Ascending aorta (tissue), 2 donors: ENCODE measurements at regions of chr19 and their contacts with region 1.

Region 1: GRCh38 chr19:57389730-57390598 is at the start of gene ZNF548:
- DNase-seq: peak; percentile 97 to 99
- H3K4me3 ChIP-seq: peak within 1 kb of the TSS; percentile 72 to 80
- H3K27ac ChIP-seq: peak within 1 kb of the TSS; percentile 93
- H3K4me1 ChIP-seq: peaks cover 0 to 10% of the 10 kb centered on the region in 2 donors
- H3K27me3 ChIP-seq: no peaks in the 10 kb centered on the region
- CTCF ChIP-seq: peak in 2 of 3 experiments; percentile 15 to 35
- total RNA-seq, gene ZNF548: 0.96 TPM

Region 2: DNA sequence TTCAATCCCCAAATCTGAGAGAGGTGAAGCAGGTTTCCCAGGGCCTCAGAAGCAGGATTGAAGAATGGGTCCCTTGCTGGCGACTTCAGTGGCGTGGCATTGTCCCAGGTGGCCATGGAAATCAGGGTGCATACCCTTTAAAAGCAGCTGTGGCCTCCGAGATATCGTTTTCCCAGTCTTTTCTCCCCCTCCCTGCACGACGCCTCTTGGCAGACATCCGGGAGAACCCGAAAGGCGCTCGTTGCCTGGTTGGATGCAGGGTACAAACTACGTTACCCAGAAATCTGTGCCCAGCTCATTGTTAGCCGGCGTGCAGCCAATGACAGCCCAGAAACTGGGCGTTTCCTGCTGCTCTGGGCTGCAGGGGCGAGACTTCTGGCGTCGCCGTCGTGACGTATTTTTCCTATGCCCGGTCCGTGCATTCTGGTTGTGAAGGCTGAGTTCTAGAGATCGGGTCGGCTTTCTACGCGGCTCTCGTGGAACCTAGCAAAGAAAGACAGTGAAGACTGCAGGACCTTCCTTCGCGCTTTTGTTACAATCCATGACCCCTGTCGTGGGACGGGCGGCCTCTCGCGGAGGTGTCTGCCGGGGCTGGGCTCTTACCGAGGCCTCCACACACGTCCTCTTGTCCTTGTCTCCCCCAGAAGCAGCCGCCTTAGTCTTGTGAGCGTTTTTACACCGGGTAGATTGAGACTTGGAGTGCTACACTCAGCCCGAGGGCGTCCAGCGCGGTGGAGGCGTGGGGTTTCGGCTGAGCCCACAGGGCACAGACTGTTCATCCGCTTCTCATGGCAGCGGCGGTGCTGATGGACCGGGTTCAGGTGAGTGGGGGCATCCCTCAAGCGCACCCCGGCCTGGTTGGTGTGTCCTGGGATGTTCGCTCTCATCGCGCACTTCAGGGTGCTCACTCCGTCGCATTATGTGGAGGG is 38.8 kb before region 1 on chr19 and contains the start of gene ZNF304:
- intact Hi-C with region 1: loop called (anchors 1 kb)
- DNase-seq: peak; percentile 79 to 95
- H3K4me3 ChIP-seq: peak within 1 kb of the TSS; percentile 71 to 75
- H3K27ac ChIP-seq: peak within 1 kb of the TSS; percentile 56 to 72
- H3K4me1 ChIP-seq: peaks cover 0 to 8% of the 10 kb centered on the region in 2 donors
- H3K27me3 ChIP-seq: no peaks in the 10 kb centered on the region
- CTCF ChIP-seq: no peak
- total RNA-seq, gene ZNF304: 5.9 TPM

Region 3: DNA sequence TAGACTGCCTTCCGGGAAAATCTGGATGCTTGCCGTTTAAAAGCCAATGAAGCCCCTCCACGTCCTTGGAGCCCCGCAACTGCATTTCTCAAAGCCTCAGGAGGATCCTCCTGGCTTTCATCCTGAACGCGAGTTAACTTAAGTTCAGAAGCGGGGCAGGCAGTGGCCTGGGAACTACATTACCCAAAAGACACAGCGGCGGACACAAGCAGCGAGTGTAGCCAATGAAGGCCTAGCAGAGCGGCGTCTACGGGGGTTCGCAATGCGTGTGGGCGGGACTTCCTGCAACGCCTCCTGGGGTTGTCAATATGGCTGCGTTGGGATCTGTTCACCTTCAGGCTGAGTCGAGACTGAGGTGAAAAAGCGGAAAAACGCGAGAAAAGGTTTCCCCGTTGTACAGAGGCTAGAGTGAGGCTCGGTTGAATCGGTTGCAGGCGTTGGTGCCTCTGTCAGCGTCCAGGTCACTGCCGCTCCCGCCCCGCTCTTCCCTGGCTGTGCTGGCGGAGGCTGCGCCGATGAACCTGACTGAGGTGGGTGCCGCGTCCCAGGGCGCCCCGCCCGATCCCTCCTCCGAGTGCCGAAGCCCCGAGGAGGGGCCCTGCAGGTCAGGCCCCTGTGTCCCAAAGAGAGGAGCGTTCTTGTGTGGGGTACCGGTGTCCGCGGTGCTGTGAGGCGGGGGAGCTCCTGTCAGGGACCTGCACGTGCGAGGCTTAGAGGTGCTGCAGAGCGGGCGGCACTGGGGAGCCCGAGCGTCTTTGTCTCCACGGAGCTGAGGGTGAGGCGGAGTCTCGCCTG is 21.1 kb after region 1 on chr19 and contains the start of gene ZNF17:
- intact Hi-C with region 1: loop called (anchors 1 kb)
- DNase-seq: peak; percentile 80 to 96
- H3K4me3 ChIP-seq: peak within 1 kb of the TSS; percentile 65 to 87
- H3K27ac ChIP-seq: peak within 1 kb of the TSS; percentile 63 to 71
- H3K4me1 ChIP-seq: no peaks in the 10 kb centered on the region
- H3K27me3 ChIP-seq: no peaks in the 10 kb centered on the region
- CTCF ChIP-seq: no peak
- total RNA-seq, gene ZNF17: 1.5 TPM

Region 4: DNA sequence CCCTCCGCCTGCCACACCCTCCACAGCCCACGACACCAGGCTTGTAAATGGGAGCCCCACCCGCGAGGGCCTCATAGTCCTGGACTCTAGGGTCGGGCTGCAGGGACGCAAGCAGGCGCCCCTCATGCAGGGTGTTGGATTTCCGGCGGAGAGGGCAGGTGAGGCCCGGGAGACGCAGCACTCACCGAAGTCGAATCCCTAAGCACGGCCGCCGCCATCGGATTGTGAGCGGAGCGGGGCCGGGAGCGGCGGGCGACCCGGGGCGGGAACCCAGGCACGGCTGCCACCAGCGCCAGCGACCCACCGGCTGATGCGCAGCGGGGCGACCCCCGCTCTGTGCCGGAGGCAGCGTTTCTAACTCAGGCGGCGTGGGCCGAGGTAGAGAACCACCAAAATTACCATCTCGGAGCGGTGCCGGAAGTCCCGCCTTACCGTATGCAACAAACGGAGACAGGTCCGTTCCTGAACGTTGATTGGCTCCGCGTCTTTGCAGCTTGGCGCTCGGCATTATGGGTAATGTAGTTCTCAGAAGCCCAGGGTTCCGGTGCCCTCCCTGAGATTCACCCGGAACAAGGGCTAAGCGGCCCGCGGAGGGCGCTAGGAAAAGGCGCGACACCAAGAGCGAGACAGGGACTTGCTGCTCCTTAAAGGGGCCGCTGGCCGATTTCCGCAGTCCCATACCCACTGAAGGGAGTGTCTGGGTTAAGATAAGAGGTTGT is 188.7 kb after region 1 on chr19 and contains the start of gene ZNF416:
- intact Hi-C with region 1: loop called (anchors 1 kb)
- DNase-seq: peak; percentile 92 to 99
- H3K4me3 ChIP-seq: peak within 1 kb of the TSS; percentile 87 to 91
- H3K27ac ChIP-seq: peak within 1 kb of the TSS; percentile 39 to 62
- H3K4me1 ChIP-seq: peaks cover 0 to 14% of the 10 kb centered on the region in 2 donors
- H3K27me3 ChIP-seq: no peaks in the 10 kb centered on the region
- CTCF ChIP-seq: peak in 1 of 3 experiments; percentile 14
- total RNA-seq, gene ZNF416: 2.7 TPM